CD4-positive, alpha-beta T cell (primary cell): ENCODE measurements at regions of chr1 and their contacts with region 1.

Region 1: GRCh38 chr1:160777486-160778089 is 18.4 kb upstream of the LY9 start:
- DNase-seq: peak in 10 of 14 experiments; percentile 22 to 83 (median 44)
- ATAC-seq: peak; percentile 83
- H3K4me3 ChIP-seq: no peak overlapping the region
- H3K4me3 Mint-ChIP-seq: no peak overlapping the region
- H3K27ac ChIP-seq: no peak overlapping the region
- H3K27ac Mint-ChIP-seq: no peak overlapping the region
- H3K4me1 ChIP-seq: peaks cover 31% of the 10 kb centered on the region
- H3K4me1 Mint-ChIP-seq: peaks cover 24% of the 10 kb centered on the region
- H3K27me3 ChIP-seq: no peaks in the 10 kb centered on the region
- H3K27me3 Mint-ChIP-seq: no peaks in the 10 kb centered on the region
- CTCF ChIP-seq: peak; percentile 72

Region 2: DNA sequence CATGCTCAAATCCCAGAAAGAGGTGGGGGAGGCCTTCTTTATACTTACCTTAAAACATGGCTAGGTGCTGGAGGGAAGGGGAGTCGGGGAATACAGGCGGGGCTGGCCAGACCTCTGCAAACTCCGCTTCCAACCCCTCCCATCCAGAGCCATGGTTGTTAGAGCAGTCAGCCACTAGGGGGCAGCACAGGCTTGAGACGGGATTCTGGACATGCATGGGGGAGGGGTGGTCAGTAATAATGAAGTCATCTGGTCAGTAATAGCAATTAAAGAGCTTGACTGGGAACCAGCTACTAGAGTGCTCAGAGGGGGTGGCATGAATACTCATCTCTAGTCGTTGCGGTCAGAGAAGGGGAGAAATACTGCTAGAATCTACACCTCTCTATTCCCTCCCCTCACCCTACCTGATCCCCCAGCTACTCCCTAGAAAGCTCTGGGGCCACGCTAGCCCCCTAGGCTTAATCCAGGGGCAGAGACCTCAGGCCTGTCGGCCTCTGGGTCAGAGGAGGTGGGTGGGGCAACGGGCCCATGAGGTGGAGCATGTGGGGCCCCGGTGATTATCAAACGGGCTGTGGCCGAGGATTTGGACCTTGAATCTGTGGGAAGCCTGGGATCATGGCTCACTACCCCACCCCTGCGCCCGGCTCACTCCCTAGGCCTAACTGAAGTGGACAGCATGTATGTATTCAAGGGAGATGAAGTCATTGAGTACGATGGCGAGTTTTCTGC is 584.3 kb before region 1 on chr1:
- CTCF ChIA-PET with region 1: no interaction called
- POLR2A ChIA-PET with region 1: no interaction called
- intact Hi-C with region 1: no loop called
- DNase-seq: peak; percentile 62 to 88 (median 78)
- ATAC-seq: peak; percentile 95
- H3K4me3 ChIP-seq: no peak overlapping the region
- H3K4me3 Mint-ChIP-seq: no peak overlapping the region
- H3K27ac ChIP-seq: no peak overlapping the region
- H3K27ac Mint-ChIP-seq: no peak overlapping the region
- H3K4me1 ChIP-seq: peaks cover 7% of the 10 kb centered on the region
- H3K4me1 Mint-ChIP-seq: no peaks in the 10 kb centered on the region
- H3K27me3 ChIP-seq: no peaks in the 10 kb centered on the region
- H3K27me3 Mint-ChIP-seq: no peaks in the 10 kb centered on the region
- CTCF ChIP-seq: peak; percentile 89

Region 3: DNA sequence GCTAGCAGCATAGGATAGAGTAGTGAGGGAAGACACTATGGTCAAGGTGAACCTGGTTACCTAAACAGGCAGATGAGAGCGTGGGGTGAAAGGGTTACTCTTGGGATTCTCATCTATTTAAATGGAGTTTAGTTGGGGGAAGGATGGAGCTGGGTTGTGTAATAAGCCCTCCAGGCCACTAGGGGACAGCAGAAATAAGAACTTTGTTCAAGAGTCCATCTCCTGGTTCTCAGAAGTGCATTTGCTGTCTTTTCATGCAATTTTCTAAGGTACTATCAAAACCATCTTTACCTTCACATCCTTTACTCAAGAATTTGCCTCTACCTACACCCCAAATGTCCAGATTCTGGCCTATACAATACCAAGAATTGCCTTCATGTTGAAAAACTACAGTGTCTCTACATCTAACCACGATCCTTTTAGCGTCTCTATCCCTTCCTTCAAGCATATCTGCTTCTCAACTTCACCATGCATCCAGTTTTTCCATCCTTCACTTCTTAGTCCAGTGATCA is 158.8 kb before region 1 on chr1:
- CTCF ChIA-PET with region 1: no interaction called
- POLR2A ChIA-PET with region 1: no interaction called
- intact Hi-C with region 1: loop called in 1 of 2 experiments (anchors 5 kb)
- DNase-seq: peak in 8 of 14 experiments; percentile 19 to 79 (median 44)
- ATAC-seq: peak; percentile 67
- H3K4me3 ChIP-seq: no peak overlapping the region
- H3K4me3 Mint-ChIP-seq: no peak overlapping the region
- H3K27ac ChIP-seq: no peak overlapping the region
- H3K27ac Mint-ChIP-seq: peak overlapping the region; percentile 42
- H3K4me1 ChIP-seq: peaks cover 44% of the 10 kb centered on the region
- H3K4me1 Mint-ChIP-seq: peaks cover 84% of the 10 kb centered on the region
- H3K27me3 ChIP-seq: no peaks in the 10 kb centered on the region
- H3K27me3 Mint-ChIP-seq: no peaks in the 10 kb centered on the region
- CTCF ChIP-seq: peak; percentile 80

Region 4: DNA sequence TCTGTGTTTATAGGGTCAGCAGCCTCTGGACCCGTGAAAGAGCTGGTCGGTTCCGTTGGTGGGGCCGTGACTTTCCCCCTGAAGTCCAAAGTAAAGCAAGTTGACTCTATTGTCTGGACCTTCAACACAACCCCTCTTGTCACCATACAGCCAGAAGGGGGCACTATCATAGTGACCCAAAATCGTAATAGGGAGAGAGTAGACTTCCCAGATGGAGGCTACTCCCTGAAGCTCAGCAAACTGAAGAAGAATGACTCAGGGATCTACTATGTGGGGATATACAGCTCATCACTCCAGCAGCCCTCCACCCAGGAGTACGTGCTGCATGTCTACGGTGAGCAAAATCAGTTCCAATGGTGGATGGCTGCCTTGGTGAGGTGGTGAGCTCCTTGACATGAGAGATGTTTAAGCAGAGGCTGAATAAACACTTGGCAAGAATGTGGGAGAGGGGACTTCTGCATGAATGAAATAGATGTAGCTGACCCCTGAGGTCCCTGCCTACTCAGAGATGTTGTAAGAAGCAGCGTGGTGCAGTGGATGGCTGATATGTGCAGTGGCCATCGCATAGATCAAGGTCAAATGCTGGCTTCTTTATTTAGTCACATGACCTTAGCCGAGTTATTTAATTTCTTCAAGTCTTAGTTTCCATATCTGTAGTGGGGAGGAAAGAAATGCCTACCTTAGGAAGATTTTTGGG is 29.3 kb before region 1 on chr1:
- CTCF ChIA-PET with region 1: no interaction called
- POLR2A ChIA-PET with region 1: no interaction called
- intact Hi-C with region 1: no loop called
- DNase-seq: peak in 1 of 14 experiments; percentile 26
- ATAC-seq: no peak
- H3K4me3 ChIP-seq: no peak overlapping the region
- H3K4me3 Mint-ChIP-seq: no peak overlapping the region
- H3K27ac ChIP-seq: no peak overlapping the region
- H3K27ac Mint-ChIP-seq: no peak overlapping the region
- H3K4me1 ChIP-seq: peaks cover 23% of the 10 kb centered on the region
- H3K4me1 Mint-ChIP-seq: peaks cover 21% of the 10 kb centered on the region
- H3K27me3 ChIP-seq: no peaks in the 10 kb centered on the region
- H3K27me3 Mint-ChIP-seq: no peaks in the 10 kb centered on the region
- CTCF ChIP-seq: no peak

Region 5: DNA sequence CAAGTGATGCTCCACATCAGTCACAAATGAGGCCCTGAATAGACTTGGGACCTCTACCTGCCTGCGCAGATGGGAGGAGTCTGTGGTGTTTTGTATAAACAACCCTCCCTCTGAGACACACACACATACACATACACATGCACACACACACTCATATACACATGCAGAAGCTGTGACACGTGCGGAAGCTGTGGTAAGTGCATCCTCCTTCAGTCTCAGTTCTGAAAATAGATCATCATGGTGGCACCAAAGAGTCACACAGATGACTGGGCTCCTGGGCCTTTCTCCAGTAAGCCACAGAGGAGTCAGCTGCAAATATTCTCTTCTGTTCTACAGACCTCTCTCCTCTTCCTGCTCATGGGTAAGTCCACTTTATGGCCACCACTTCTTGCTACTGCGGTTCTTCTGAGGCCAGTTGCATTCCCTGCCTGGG is 18.4 kb after region 1 on chr1 and contains the start of gene LY9:
- CTCF ChIA-PET with region 1: interaction called, 15 read pairs
- POLR2A ChIA-PET with region 1: interaction called, 23 read pairs
- intact Hi-C with region 1: loop called in 1 of 2 experiments (anchors 2 kb)
- DNase-seq: peak; percentile 64 to 97 (median 72)
- ATAC-seq: peak; percentile 88
- H3K4me3 ChIP-seq: peak within 1 kb of the TSS; percentile 74
- H3K4me3 Mint-ChIP-seq: peak within 1 kb of the TSS; percentile 97
- H3K27ac ChIP-seq: peak within 1 kb of the TSS; percentile 73 to 88
- H3K27ac Mint-ChIP-seq: peak within 1 kb of the TSS; percentile 92
- H3K4me1 ChIP-seq: peaks cover 37% of the 10 kb centered on the region
- H3K4me1 Mint-ChIP-seq: peaks cover 62% of the 10 kb centered on the region
- H3K27me3 ChIP-seq: no peaks in the 10 kb centered on the region
- H3K27me3 Mint-ChIP-seq: no peaks in the 10 kb centered on the region
- CTCF ChIP-seq: no peak
- total RNA-seq, gene LY9: 124 TPM

Region 6: DNA sequence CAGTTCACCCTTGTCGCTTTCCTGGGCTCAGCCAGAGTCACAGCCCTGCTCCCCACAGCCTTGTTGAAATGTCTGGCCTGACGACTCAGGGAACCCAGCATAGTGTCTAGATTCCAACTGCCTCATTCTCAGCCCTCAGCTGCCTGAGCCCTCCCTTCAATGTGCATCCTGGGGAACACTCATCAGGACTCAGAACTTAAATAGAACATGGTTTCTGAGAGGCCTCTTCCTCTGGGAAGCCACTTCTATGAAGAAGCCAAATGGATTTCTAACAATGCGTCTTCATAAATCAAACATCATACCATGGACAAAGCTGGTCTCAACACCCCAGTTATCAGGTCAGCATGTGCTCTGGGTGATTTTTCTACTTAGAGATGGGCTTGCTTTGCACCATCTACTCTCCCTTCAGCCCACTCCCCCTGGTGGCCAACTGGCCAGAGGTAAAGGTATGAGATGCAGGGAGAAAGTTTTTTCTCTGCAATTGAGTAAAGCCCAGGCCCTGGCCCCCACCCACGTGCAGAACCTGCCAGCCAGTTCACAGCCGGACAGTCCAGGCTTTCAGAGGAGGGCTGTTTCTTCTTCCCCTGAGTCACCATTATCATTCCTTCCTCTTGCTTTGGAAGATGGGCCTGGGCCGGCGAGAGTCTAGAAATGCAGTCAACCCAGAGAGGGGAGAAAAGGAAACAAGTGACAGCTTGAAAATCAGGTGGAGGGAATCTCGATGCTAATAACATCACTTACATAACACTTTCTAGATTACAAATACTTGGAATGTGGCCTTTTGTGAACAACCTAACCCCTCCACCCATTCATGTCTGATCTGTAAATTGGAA is 52.9 kb after region 1 on chr1:
- CTCF ChIA-PET with region 1: interaction called, 25 read pairs
- POLR2A ChIA-PET with region 1: interaction called, 12 read pairs
- intact Hi-C with region 1: loop called (anchors 1 kb)
- DNase-seq: peak; percentile 67 to 89 (median 76)
- ATAC-seq: peak; percentile 84
- H3K4me3 ChIP-seq: no peak overlapping the region
- H3K4me3 Mint-ChIP-seq: no peak overlapping the region
- H3K27ac ChIP-seq: no peak overlapping the region
- H3K27ac Mint-ChIP-seq: peak overlapping the region; percentile 81
- H3K4me1 ChIP-seq: peaks cover 17% of the 10 kb centered on the region
- H3K4me1 Mint-ChIP-seq: peaks cover 35% of the 10 kb centered on the region
- H3K27me3 ChIP-seq: no peaks in the 10 kb centered on the region
- H3K27me3 Mint-ChIP-seq: no peaks in the 10 kb centered on the region
- CTCF ChIP-seq: peak; percentile 87

Region 7: DNA sequence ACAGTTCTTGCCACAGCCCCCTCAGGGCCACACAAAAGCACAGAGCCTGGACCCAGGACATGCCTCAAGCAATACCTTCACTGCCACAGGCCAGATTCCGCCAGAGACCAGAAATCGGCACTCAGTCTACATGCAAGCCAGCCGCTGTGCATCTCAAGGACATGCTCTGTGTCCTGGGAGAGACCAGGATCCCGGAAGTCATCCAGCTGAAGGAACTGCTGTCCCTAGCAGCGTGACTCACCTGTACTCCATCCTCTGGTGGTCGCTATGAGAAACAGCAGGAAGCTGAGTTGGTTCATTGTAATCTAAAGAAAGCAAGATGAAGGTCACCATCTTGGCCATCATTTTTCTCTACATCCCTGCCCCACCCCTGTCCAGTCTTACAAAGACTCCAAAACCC is 107.0 kb after region 1 on chr1:
- CTCF ChIA-PET with region 1: no interaction called
- POLR2A ChIA-PET with region 1: no interaction called
- intact Hi-C with region 1: loop called (anchors 2 to 5 kb)
- DNase-seq: peak in 1 of 14 experiments; percentile 72
- ATAC-seq: peak; percentile 78
- H3K4me3 ChIP-seq: no peak overlapping the region
- H3K4me3 Mint-ChIP-seq: no peak overlapping the region
- H3K27ac ChIP-seq: no peak overlapping the region
- H3K27ac Mint-ChIP-seq: no peak overlapping the region
- H3K4me1 ChIP-seq: peaks cover 9% of the 10 kb centered on the region
- H3K4me1 Mint-ChIP-seq: peaks cover 5% of the 10 kb centered on the region
- H3K27me3 ChIP-seq: peaks cover 0 to 4% of the 10 kb centered on the region in 2 experiments
- H3K27me3 Mint-ChIP-seq: peaks cover 4% of the 10 kb centered on the region
- CTCF ChIP-seq: peak; percentile 71

Region 8: DNA sequence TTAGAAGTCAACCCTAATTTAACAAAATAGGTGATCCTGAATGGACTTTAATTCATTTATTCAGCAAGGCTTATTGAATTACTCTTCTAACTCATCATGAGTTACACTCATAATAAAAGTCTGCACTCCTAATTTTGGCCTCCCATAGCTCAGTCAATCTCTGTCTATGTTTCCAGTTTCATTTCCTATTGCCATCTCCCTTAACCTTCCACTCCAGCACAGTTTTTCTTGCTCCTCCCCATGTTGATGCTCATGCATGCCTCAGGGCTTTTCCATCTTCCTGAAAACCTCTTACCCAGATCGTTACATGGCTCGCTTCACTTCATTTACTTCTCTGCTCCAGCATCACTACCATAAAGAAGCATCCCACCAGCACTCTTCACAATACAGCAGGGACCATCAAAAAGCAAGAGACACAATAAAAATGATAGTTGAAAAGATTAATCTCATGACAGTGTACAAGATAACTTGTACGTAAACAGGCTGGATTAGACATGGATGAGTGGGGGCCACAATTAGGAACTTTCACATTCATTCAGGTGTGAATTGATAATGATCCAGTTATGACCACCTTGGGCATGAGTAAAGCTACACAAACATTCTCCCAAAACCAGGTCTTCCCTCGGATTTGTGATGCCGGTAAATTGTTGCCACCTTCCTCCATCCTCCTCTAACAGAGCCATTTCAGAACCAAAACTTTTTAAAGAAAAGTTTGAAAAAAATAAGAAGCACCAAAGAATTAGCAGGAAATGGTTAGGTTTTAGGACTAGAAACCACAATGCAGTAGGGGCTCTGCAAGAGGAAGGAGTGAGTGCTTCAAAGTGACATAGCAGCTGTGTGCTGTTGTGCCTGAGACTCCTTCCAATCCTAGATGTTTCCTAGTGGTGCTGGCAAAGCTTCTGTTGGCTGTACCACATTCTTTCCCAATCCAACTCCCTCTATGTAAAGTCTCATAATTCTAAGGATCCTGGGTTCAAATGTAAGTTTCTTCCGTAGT is 1156.3 kb after region 1 on chr1:
- CTCF ChIA-PET with region 1: no interaction called
- POLR2A ChIA-PET with region 1: no interaction called
- intact Hi-C with region 1: no loop called
- DNase-seq: peak in 6 of 14 experiments; percentile 3 to 75 (median 34)
- ATAC-seq: peak; percentile 86
- H3K4me3 ChIP-seq: peak overlapping the region; percentile 13
- H3K4me3 Mint-ChIP-seq: peak overlapping the region; percentile 35
- H3K27ac ChIP-seq: peak overlapping the region in 1 of 2 donors; percentile 42
- H3K27ac Mint-ChIP-seq: peak overlapping the region; percentile 79
- H3K4me1 ChIP-seq: peaks cover 23% of the 10 kb centered on the region
- H3K4me1 Mint-ChIP-seq: peaks cover 68% of the 10 kb centered on the region
- H3K27me3 ChIP-seq: no peaks in the 10 kb centered on the region
- H3K27me3 Mint-ChIP-seq: no peaks in the 10 kb centered on the region
- CTCF ChIP-seq: no peak